AG04449 (cell line): ENCODE measurements at regions of chr1 and their contacts with region 1.

Region 1: GRCh38 chr1:20233394-20233793 is 47.1 kb upstream of the PLA2G2C start:
- DNase-seq: no peak
- H3K4me3 ChIP-seq: no peak overlapping the region
- CTCF ChIP-seq: peak; percentile 18

Region 2: DNA sequence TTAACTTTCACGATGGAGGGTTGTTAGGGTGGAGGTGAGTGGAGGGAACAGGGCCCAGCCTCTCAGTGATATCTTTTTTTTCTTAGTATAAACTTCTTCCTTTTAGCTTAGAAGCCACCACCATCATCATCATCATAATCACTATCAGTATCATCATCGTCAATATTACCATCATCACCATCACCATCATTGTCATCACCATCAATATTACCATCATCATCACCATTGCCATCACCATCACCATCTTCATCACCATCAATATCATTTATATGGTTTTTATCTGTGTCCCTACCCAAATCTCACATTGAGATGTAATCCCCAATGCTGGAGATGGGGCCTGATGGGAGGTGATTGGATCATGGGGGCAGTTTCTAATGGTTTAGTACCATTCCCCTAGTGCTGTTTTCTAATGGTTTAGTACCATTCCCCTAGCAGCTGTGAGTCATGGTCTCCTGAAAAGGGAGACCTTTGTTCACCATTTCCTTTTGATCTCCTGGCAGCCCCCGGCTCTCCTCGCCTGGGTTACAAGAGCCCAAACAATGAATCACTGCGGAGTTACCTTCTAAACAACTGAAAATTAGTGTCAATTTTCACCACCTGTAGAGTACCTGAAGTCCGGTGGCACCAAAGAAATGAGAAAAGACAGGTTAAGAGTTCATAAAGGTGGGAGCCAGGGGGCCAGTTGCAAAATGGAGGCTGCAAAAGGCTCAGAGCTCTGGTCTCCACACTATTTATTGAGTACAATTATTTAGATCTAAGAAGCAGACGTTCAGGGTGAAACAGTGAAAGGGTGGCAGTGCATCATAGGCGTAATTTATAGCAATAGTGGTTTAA is 306.9 kb before region 1 on chr1:
- CTCF ChIA-PET with region 1: no interaction called
- POLR2A ChIA-PET with region 1: no interaction called
- DNase-seq: no peak
- H3K4me3 ChIP-seq: no peak overlapping the region
- CTCF ChIP-seq: no peak

Region 3: DNA sequence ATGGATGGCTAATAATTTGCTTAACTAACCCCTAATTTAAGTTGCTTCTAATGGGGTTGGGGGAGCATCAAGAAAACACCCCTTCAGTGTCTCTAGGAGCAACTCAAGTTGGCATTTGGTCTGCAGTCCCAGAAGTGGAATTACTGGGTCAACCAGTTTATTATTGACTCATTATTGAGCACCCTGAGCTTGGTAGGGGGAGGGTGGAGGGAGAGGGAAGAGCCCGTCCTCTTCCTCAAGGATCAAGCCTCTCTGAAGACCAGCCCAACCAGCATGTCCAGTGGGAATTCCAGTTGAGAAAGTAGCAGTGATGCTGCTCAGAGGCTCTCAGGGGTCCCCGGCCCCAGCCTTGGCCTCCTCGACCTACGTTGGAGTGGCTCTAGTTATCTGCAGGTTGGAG is 96.4 kb before region 1 on chr1:
- CTCF ChIA-PET with region 1: no interaction called
- POLR2A ChIA-PET with region 1: no interaction called
- DNase-seq: no peak
- H3K4me3 ChIP-seq: no peak overlapping the region
- CTCF ChIP-seq: no peak

Region 4: DNA sequence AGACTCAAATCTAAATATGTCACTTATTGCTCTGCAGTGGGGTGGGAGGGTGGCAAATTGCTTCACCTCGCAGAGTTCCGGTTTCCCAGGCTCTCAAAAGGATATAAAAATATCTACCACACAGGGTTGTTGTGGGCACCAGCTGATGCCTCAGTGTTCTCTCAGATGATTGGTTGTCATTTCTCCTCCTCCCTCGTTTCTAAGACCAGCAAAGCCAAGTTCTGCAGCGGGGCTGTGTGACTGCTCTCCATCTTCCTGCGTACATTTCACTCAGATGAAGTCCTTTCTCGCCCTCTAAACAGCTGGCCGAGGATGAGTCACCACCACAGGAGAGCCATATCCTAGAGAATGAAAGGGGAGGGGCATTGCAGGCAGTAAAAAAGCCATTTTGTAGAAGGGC is 22.3 kb after region 1 on chr1:
- CTCF ChIA-PET with region 1: interaction called, 10 read pairs
- POLR2A ChIA-PET with region 1: no interaction called
- DNase-seq: no peak
- H3K4me3 ChIP-seq: no peak overlapping the region
- CTCF ChIP-seq: no peak